ENCODE measurements at regions of chr9 and their contacts with region 1.

Region 1: DNA sequence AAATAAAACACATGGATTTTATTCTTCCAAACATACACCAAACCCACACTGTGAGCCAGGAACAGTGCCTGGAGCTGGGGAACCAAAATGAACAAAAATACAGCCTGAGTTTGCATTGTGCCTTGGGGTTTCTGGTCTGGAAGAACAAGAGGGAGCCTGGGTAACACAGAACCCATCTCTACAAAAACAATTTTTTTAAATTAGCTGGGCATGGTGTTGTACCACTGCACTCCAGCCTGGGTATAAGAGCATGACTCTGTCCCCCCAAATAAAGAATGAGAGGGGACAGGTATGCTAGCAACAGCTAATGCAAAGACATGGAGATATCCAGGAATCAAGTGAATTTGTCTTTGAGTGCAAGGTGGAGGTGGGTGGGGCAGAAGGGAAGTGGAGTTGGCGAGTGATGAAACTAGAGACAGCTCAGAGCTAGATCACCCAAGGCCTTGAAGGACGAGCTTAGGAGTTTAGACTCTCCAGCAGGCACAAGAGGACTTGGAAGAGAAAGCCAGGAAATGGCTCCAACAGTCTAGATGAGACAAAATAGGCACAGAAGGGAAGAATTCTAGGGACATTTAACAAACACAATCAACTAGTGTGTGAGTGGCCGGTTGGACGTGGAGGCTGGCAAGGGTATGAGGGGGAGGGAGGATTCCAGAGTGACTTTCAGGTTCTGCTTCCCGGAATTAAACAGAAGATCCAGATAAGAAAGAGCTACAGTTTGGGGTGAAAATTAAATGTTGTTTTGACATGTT is 47.4 kb downstream of the FNBP1 start:
- DNase-seq: peak; percentile 65 to 86 (median 81)
- H3K4me3 ChIP-seq: peak overlapping the region in 2 of 3 experiments; percentile 29 to 65
- H3K4me3 Mint-ChIP-seq: peak overlapping the region; percentile 57 to 92
- H3K27ac ChIP-seq: peak overlapping the region; percentile 96 to 100
- H3K27ac Mint-ChIP-seq: peak overlapping the region; percentile 99 to 100 (median 99)
- H3K4me1 ChIP-seq: peaks cover 35 to 43% of the 10 kb centered on the region in 2 donors
- H3K4me1 Mint-ChIP-seq: peaks cover 48% of the 10 kb centered on the region
- H3K27me3 ChIP-seq: no peaks in the 10 kb centered on the region
- H3K27me3 Mint-ChIP-seq: no peaks in the 10 kb centered on the region
- CTCF ChIP-seq: no peak

Region 2: DNA sequence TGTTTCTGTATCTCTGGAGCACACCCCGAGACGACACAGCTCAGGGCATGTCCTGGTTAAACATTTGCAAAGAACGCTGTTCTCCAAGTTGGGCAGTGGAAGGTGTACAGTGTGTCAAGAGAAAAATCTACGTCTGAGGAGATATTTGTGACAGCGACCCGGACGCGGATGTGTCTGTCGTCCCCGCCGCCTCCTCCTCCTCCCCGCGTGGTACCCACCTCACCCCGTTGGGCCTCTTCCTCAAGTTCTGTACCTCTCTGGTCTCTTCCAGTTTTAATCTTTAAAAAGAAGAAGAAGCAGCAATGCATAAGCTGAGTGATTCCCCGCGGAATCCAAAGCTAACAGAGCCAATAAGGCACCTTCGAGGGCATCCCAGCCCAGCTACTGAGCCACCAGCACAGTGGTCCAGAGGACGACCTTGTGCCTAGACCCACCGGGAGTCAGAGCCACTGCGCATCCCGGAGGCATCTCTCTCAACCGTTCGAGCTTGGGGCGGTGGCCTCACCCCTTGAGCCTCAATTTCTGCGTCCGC is 161.0 kb before region 1 on chr9:
- intact Hi-C with region 1: no loop called
- DNase-seq: peak; percentile 9 to 26 (median 19)
- H3K4me3 ChIP-seq: peak overlapping the region; percentile 54 to 88 (median 87)
- H3K4me3 Mint-ChIP-seq: peak overlapping the region; percentile 97 to 98
- H3K27ac ChIP-seq: peak overlapping the region; percentile 87 to 94
- H3K27ac Mint-ChIP-seq: peak overlapping the region; percentile 95 to 98 (median 97)
- H3K4me1 ChIP-seq: peaks cover 20 to 26% of the 10 kb centered on the region in 2 donors
- H3K4me1 Mint-ChIP-seq: peaks cover 32% of the 10 kb centered on the region
- H3K27me3 ChIP-seq: no peaks in the 10 kb centered on the region
- H3K27me3 Mint-ChIP-seq: peaks cover 0 to 3% (median 1%) of the 10 kb centered on the region in 3 donors
- CTCF ChIP-seq: no peak

Region 3: DNA sequence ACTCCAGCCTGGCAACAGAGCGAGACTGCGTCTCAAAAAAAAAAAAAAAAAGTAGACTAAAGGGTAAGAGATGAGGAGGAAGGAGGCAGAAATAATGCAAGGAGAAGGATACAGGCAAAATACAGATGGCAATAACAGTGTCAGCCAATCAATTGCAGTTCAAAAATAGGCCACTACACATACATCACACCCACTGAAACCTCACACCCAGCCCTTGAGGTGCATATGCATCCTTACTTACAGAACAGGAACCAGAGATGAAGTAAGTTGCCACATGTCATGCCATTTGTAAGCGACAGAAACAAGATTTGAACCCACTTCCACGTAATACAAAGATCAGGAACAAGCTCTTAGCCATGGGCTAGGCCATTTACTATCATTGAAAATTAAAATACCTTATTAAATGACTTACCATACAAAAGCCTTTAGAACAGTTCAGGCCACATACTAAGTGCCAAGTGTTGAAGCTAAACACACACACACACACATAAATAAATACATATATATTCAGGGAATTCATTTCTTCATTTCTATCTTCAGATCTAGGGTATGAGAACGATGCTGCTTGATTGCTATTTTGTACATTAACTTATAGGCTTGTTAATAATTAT is 51.0 kb before region 1 on chr9:
- intact Hi-C with region 1: loop called in 1 of 2 experiments (anchors 10 kb)
- DNase-seq: peak; percentile 80 to 91 (median 87)
- H3K4me3 ChIP-seq: peak overlapping the region in 1 of 3 experiments; percentile 65
- H3K4me3 Mint-ChIP-seq: no peak overlapping the region
- H3K27ac ChIP-seq: peak overlapping the region; percentile 35 to 91
- H3K27ac Mint-ChIP-seq: peak overlapping the region; percentile 90 to 96 (median 95)
- H3K4me1 ChIP-seq: peaks cover 46 to 66% of the 10 kb centered on the region in 2 donors
- H3K4me1 Mint-ChIP-seq: peaks cover 42% of the 10 kb centered on the region
- H3K27me3 ChIP-seq: no peaks in the 10 kb centered on the region
- H3K27me3 Mint-ChIP-seq: no peaks in the 10 kb centered on the region
- CTCF ChIP-seq: peak; percentile 50

Region 4: DNA sequence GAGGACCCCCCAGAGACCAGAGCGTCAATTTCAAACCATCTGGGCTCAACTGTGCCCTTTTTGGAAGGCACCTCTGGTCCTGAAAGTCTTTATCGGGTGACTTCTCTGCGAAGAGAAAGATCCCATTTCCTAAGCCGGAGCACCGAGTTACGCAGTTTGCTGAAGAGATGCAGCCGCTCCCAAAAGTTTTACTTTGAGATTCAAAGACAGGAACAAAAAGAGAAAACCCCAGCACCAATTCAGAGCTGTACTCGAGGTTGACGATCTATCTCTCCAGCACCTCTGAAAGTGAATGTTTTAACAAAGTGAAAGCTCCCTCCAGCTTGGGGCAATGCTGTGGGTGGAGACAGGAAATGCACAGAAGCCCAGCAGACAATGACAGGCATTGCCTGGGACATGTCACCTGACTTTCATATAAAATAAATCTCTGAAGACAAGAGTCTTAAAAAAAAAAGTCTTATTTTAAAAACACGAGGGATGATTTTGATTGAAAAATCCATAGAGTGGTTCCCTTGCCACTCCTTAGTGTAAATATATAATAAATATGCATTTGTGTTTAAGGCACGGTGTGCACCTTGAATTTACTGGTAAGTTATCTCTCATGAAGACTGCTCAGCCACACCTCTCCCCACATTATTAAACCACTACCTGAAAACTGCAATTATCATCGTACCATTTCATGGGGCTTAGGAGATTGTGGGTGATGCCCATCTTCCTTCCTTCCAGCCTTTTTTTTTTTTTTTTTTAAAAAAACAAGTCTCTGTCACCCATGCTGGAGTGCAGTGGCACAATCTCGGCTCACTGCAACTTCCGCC is 32.5 kb before region 1 on chr9:
- intact Hi-C with region 1: loop called in 1 of 2 experiments (anchors 5 kb)
- DNase-seq: peak; percentile 65 to 70 (median 67)
- H3K4me3 ChIP-seq: peak overlapping the region; percentile 46 to 87 (median 51)
- H3K4me3 Mint-ChIP-seq: peak overlapping the region; percentile 79 to 89
- H3K27ac ChIP-seq: peak overlapping the region; percentile 91 to 98
- H3K27ac Mint-ChIP-seq: peak overlapping the region; percentile 94 to 98 (median 95)
- H3K4me1 ChIP-seq: peaks cover 56 to 76% of the 10 kb centered on the region in 2 donors
- H3K4me1 Mint-ChIP-seq: peaks cover 72% of the 10 kb centered on the region
- H3K27me3 ChIP-seq: no peaks in the 10 kb centered on the region
- H3K27me3 Mint-ChIP-seq: peaks cover 0 to 2% (median 0%) of the 10 kb centered on the region in 3 donors
- CTCF ChIP-seq: no peak

Region 5: GRCh38 chr9:130034570-130034969 is 39.0 kb after region 1 on chr9:
- intact Hi-C with region 1: loop called (anchors 5 kb)
- DNase-seq: peak; percentile 73 to 87 (median 85)
- H3K4me3 ChIP-seq: no peak overlapping the region
- H3K4me3 Mint-ChIP-seq: peak overlapping the region in 1 of 2 donors; percentile 24
- H3K27ac ChIP-seq: peak overlapping the region; percentile 68 to 81
- H3K27ac Mint-ChIP-seq: peak overlapping the region; percentile 80 to 96 (median 93)
- H3K4me1 ChIP-seq: peaks cover 77 to 89% of the 10 kb centered on the region in 2 donors
- H3K4me1 Mint-ChIP-seq: peaks cover 90% of the 10 kb centered on the region
- H3K27me3 ChIP-seq: no peaks in the 10 kb centered on the region
- H3K27me3 Mint-ChIP-seq: no peaks in the 10 kb centered on the region
- CTCF ChIP-seq: no peak

Region 6: GRCh38 chr9:130051871-130052340 is 56.3 kb after region 1 on chr9:
- intact Hi-C with region 1: no loop called
- DNase-seq: no peak
- H3K4me3 ChIP-seq: no peak overlapping the region
- H3K4me3 Mint-ChIP-seq: peak overlapping the region in 1 of 2 donors; percentile 39
- H3K27ac ChIP-seq: no peak overlapping the region
- H3K27ac Mint-ChIP-seq: peak overlapping the region in 6 of 7 donors; percentile 43 to 79 (median 60)
- H3K4me1 ChIP-seq: peaks cover 30 to 40% of the 10 kb centered on the region in 2 donors
- H3K4me1 Mint-ChIP-seq: peaks cover 32% of the 10 kb centered on the region
- H3K27me3 ChIP-seq: no peaks in the 10 kb centered on the region
- H3K27me3 Mint-ChIP-seq: no peaks in the 10 kb centered on the region
- CTCF ChIP-seq: no peak